Activated CD4-positive, alpha-beta T cell treated with anti-CD3 and anti-CD28 coated beads, Interleukin-2, amount 10 ng/mL, durations not matched to agents 24 days and 14 days (primary cell): ENCODE measurements at regions of chr16 and their contacts with region 1.

Region 1: GRCh38 chr16:8567750-8568617 is 22.3 kb downstream of the TMEM114 start:
- DNase-seq: peak; percentile 93
- H3K4me3 Mint-ChIP-seq: no peak overlapping the region
- H3K27ac Mint-ChIP-seq: peak overlapping the region; percentile 34
- H3K4me1 Mint-ChIP-seq: peaks cover 5% of the 10 kb centered on the region
- H3K27me3 Mint-ChIP-seq: no peaks in the 10 kb centered on the region

Region 2: GRCh38 chr16:8469102-8469778 is 98.7 kb before region 1 on chr16:
- intact Hi-C with region 1: no loop called
- DNase-seq: no peak
- H3K4me3 Mint-ChIP-seq: no peak overlapping the region
- H3K27ac Mint-ChIP-seq: no peak overlapping the region
- H3K4me1 Mint-ChIP-seq: no peaks in the 10 kb centered on the region
- H3K27me3 Mint-ChIP-seq: no peaks in the 10 kb centered on the region

Region 3: DNA sequence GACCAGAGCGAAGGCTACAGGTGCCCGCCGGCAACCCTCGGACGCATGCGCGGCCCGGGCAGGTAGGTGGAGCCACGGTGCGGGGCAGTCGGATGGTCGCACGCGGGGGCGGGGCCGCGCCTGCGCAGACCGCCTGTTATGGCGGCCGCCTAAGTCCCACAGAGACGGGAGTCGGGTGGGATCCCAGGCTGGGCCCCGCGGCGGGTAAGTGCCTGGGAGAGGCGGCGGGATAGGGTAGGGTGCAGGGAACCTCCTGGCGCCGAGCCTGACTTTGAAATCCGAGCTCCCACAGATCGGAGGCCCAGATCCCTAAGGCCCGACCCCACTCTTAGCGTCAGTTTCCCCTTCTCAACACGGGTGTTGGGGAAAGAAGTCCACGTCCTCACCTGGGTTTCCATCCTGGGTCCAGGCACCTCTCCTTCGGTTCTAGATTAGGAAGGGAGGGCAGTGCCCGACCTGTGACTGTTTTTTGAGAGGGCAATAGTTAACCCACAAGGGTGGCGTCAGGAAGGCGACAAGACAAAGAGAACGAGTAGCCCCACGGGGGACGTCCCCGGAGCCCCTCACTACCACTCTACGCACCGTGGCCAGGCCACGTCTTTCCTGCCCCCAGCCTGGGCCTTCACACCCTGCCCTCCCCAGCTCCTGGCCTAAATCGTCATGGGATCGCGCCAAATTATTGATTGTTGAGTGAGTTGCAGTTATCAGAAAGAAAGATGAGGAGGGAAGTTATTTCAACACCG is 53.8 kb after region 1 on chr16 and contains the start of gene METTL22:
- intact Hi-C with region 1: loop called (anchors 2 kb)
- DNase-seq: peak; percentile 98
- H3K4me3 Mint-ChIP-seq: peak within 1 kb of the TSS; percentile 96
- H3K27ac Mint-ChIP-seq: peak within 1 kb of the TSS; percentile 92
- H3K4me1 Mint-ChIP-seq: peaks cover 12% of the 10 kb centered on the region
- H3K27me3 Mint-ChIP-seq: peaks cover 20% of the 10 kb centered on the region
- total RNA-seq, gene METTL22: 36.2 and 38.4 TPM in 2 replicates

Region 4: DNA sequence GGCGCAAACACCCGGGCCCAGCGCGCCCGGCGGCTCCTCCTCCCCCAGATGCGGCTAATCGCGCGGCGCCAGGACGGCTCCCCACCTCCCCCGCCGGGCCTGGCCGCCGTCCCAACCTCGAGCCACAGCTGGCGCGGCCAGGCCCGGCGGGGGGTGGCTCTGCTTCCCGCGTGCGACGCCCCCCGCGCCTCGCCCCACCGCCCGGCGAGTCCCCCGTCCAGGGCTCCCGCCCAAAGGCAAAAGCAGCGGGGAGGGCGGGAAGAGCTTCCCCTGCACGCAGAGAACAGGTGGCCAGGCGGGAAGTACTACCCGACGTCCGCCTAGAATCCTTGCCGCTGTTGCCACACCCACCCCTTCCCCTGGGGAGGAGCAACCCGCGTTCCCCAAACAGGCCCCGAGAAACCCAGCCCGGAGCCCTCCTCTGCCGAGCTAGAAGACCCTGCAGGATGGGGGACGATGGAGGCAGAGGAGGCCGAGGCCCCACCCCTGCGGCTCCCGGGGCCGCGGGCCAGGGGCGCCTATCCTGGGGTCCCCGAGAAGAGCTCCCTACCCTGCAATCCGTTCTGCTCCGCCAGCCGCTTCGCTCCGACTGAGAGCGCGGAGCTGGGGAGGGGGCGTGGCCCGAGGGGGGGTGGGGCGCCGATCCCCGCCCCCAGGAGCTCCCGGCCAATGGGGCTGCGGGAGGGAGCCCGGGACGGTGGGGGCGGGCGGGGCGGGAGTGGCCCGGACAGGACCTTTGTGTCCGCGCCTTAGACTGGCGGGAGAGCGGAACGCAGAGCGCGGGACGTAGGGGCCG is 300.6 kb after region 1 on chr16 and contains the start of gene CARHSP1:
- intact Hi-C with region 1: loop called (anchors 5 kb)
- DNase-seq: peak; percentile 95
- H3K4me3 Mint-ChIP-seq: peak within 1 kb of the TSS; percentile 90
- H3K27ac Mint-ChIP-seq: peak within 1 kb of the TSS; percentile 89
- H3K4me1 Mint-ChIP-seq: peaks cover 39% of the 10 kb centered on the region
- H3K27me3 Mint-ChIP-seq: no peaks in the 10 kb centered on the region
- total RNA-seq, gene CARHSP1: 67.7 and 73.3 TPM in 2 replicates

Region 5: DNA sequence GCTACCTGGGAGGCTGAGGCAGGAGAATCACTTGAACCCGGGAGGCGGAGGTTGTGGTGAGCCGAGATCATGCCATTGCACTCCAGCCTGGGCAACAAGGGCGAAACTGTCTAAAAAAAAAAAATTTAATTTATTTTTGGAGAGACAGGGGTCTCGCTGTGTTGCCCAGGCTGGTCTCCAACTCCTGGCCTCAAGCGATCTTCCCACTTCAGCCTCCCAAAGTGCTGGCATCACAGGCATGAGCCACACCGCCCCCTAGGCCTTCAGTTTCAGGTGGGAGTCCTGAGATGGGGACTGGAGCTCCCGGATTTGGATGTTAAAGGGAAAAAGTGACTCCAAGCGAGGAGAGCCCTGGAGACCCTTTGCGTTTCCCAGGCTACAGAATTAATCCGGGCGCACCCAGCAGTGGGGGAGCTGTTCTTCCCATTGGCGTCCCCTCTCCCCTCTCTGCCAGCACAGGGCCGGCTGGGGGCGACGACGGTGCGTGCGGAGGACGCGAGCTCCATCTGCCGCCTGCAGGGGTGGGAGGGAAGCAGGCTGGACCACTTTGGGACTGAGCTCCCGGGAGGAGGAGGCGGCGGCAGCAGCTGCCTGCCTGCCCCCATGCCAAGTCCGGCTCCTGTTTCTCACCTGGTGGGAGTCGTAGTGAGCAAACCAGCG is 445.0 kb after region 1 on chr16:
- intact Hi-C with region 1: no loop called
- DNase-seq: no peak
- H3K4me3 Mint-ChIP-seq: no peak overlapping the region
- H3K27ac Mint-ChIP-seq: no peak overlapping the region
- H3K4me1 Mint-ChIP-seq: no peaks in the 10 kb centered on the region
- H3K27me3 Mint-ChIP-seq: peaks cover 7% of the 10 kb centered on the region

Region 6: GRCh38 chr16:9047686-9048301 is 479.8 kb after region 1 on chr16:
- intact Hi-C with region 1: loop called (anchors 10 kb)
- DNase-seq: peak; percentile 79
- H3K4me3 Mint-ChIP-seq: peak overlapping the region; percentile 24
- H3K27ac Mint-ChIP-seq: peak overlapping the region; percentile 83
- H3K4me1 Mint-ChIP-seq: peaks cover 31% of the 10 kb centered on the region
- H3K27me3 Mint-ChIP-seq: no peaks in the 10 kb centered on the region

Region 7: GRCh38 chr16:10509534-10510025 is 1941.6 kb after region 1 on chr16:
- intact Hi-C with region 1: loop called (anchors 5 kb)
- DNase-seq: peak; percentile 90
- H3K4me3 Mint-ChIP-seq: no peak overlapping the region
- H3K27ac Mint-ChIP-seq: no peak overlapping the region
- H3K4me1 Mint-ChIP-seq: peaks cover 15% of the 10 kb centered on the region
- H3K27me3 Mint-ChIP-seq: peaks cover 8% of the 10 kb centered on the region